ENCODE measurements at regions of chr16 and their contacts with region 1.

Region 1: GRCh38 chr16:4253394-4254150 is 11.7 kb upstream of the SRL start:
- DNase-seq: peak; percentile 94 to 100 (median 100)
- ATAC-seq: peak; percentile 97
- H3K4me3 ChIP-seq: peak overlapping the region; percentile 92
- H3K4me3 Mint-ChIP-seq: peak overlapping the region; percentile 88 to 98 (median 96)
- H3K27ac ChIP-seq: peak overlapping the region; percentile 88
- H3K27ac Mint-ChIP-seq: peak overlapping the region; percentile 88 to 98 (median 96)
- H3K4me1 ChIP-seq: peaks cover 3 to 4% of the 10 kb centered on the region in 2 donors
- H3K4me1 Mint-ChIP-seq: peaks cover 0 to 16% (median 8%) of the 10 kb centered on the region in 7 donors
- H3K27me3 ChIP-seq: no peaks in the 10 kb centered on the region
- H3K27me3 Mint-ChIP-seq: no peaks in the 10 kb centered on the region

Region 2: GRCh38 chr16:3611146-3611975 is 642.2 kb before region 1 on chr16 and contains the start of gene SLX4:
- CTCF ChIA-PET with region 1: interaction called, 3 read pairs
- POLR2A ChIA-PET with region 1: interaction called, 3 read pairs
- intact Hi-C with region 1: loop called in 1 of 2 experiments (anchors 1 kb)
- DNase-seq: peak; percentile 88 to 97 (median 95)
- ATAC-seq: peak; percentile 92
- H3K4me3 ChIP-seq: peak within 1 kb of the TSS; percentile 99
- H3K4me3 Mint-ChIP-seq: peak within 1 kb of the TSS; percentile 93 to 100 (median 99)
- H3K27ac ChIP-seq: peak within 1 kb of the TSS; percentile 90
- H3K27ac Mint-ChIP-seq: peak within 1 kb of the TSS; percentile 92 to 99 (median 98)
- H3K4me1 ChIP-seq: peaks cover 18 to 21% of the 10 kb centered on the region in 2 donors
- H3K4me1 Mint-ChIP-seq: peaks cover 37 to 70% (median 62%) of the 10 kb centered on the region in 7 donors
- H3K27me3 ChIP-seq: no peaks in the 10 kb centered on the region
- H3K27me3 Mint-ChIP-seq: no peaks in the 10 kb centered on the region
- total RNA-seq, gene SLX4: 7.1 to 12.5 (median 8.5) TPM

Region 3: DNA sequence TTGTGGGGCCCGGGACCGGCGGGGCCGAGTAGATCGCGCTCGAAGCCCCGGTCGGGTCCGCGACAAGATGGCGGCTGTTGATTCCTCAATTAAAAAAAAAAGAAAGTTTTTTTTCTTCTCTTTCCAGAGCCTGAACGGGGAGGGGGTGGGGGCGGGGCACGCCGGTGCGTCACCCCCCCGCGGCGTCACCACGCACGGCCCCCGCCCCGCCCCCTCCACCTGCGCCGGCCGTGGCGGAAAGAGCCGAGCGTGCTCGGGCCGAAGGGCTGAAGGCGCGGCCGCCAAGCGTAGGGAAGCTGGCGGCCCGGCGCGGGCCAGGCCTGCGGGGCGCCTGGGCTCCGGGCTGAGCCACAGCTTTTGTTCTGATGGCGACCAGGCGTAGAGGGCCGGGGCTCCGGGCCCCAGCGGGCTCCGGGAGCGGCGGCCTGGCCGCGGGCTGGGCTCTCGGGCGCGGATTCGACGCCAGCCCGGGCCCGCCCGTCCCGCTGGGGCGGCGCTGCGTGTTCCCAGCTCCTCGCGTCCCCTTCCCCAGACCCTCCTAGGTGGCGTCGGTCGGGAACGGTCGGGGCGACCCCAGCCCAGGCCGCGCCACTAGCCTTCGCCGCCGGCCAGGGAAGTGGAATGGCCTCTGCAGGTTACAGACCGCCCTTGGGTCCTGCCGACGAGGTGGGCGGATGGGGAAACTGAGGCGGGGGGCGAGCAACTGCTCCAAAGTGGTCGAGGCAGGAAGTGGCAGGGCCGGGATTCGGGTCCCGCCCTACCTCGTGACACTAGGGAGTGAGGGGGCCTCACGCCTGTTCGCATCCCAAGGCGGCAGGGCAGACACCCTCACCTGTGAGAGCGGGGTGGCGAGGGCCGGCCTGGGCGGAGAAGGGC is 372.7 kb before region 1 on chr16 and contains the start of gene CREBBP:
- CTCF ChIA-PET with region 1: interaction called, 3 read pairs
- POLR2A ChIA-PET with region 1: no interaction called
- intact Hi-C with region 1: loop called (anchors 2 to 5 kb)
- DNase-seq: peak; percentile 79 to 92 (median 89)
- ATAC-seq: peak; percentile 94
- H3K4me3 ChIP-seq: peak within 1 kb of the TSS; percentile 82
- H3K4me3 Mint-ChIP-seq: peak within 1 kb of the TSS; percentile 77 to 100 (median 94)
- H3K27ac ChIP-seq: peak within 1 kb of the TSS; percentile 85
- H3K27ac Mint-ChIP-seq: peak within 1 kb of the TSS; percentile 71 to 96 (median 91)
- H3K4me1 ChIP-seq: peaks cover 23 to 24% of the 10 kb centered on the region in 2 donors
- H3K4me1 Mint-ChIP-seq: peaks cover 32 to 46% (median 39%) of the 10 kb centered on the region in 7 donors
- H3K27me3 ChIP-seq: no peaks in the 10 kb centered on the region
- H3K27me3 Mint-ChIP-seq: peaks cover 0 to 8% (median 6%) of the 10 kb centered on the region in 5 donors
- total RNA-seq, gene CREBBP: 73.6 to 194 (median 137) TPM

Region 4: DNA sequence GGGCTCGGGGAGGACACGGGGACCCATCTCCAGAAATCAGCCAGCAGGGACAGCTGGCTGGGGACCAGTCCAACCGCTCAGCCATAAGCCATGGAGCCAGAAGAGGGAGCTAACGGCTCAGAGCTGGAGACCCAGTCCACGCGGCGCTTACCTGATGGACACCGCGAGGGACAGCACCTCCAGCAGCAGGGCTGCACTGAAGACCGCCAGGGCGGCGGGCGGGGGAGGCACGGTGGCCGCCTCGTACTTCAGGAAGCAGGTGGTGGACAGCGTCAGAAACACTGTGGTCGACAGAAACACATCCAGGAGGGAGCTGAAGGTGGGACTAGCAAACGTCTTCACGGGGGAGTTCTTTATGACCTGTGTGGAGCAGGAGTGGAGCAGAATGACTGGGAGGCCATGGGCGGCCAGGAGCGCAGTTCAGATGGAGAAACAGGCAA is 270.5 kb before region 1 on chr16:
- CTCF ChIA-PET with region 1: interaction called, 3 read pairs
- POLR2A ChIA-PET with region 1: interaction called, 5 read pairs
- intact Hi-C with region 1: loop called in 1 of 2 experiments (anchors 1 kb)
- DNase-seq: peak in 7 of 9 donors; percentile 23 to 48 (median 27)
- ATAC-seq: peak; percentile 82
- H3K4me3 ChIP-seq: no peak overlapping the region
- H3K4me3 Mint-ChIP-seq: peak overlapping the region in 1 of 10 donors; percentile 37
- H3K27ac ChIP-seq: no peak overlapping the region
- H3K27ac Mint-ChIP-seq: peak overlapping the region in 2 of 9 donors; percentile 20 to 36
- H3K4me1 ChIP-seq: no peaks in the 10 kb centered on the region
- H3K4me1 Mint-ChIP-seq: peaks cover 0 to 10% (median 7%) of the 10 kb centered on the region in 7 donors
- H3K27me3 ChIP-seq: no peaks in the 10 kb centered on the region
- H3K27me3 Mint-ChIP-seq: no peaks in the 10 kb centered on the region

Region 5: DNA sequence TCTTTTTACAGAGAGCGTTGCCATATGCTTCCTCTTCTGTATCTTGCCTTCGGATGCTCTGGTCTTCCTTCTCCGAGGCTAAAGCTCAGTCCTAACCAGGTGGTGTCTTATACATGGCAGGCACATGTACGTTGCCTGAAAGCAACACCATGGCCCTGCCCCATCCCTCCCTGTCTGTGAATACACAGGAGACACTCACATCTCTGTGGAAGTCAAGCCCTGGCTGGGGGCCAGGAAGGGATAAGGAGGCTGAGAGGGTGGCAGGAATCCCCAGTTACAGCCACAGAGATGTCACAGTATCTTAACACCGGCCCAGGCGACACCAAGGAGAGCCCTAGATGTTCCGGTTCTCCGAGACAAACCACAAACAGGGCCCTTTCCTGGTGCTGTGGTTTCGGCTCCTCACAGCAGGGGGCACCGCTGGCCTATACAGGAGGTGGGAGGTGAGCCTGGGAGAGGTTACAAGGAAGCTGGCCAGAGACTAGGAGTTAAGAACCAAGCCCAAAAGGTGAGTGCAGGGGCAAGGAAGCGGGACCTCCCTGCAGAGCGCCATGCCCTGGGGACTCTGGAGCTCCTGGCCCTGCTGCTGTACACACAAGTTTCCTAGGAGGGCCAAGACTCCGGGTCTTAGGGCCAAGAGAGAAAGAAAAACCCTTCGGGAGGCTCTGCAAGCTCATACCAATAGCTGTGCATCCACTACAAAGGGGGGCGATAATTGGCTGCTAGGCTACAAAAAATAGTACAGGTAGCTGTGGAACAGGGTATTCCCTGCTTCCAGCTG is 53.4 kb before region 1 on chr16:
- CTCF ChIA-PET with region 1: interaction called, 3 read pairs
- POLR2A ChIA-PET with region 1: no interaction called
- intact Hi-C with region 1: loop called in 1 of 2 experiments (anchors 1 kb)
- DNase-seq: peak in 4 of 9 donors; percentile 8 to 27 (median 21)
- ATAC-seq: peak; percentile 59
- H3K4me3 ChIP-seq: no peak overlapping the region
- H3K4me3 Mint-ChIP-seq: no peak overlapping the region
- H3K27ac ChIP-seq: no peak overlapping the region
- H3K27ac Mint-ChIP-seq: no peak overlapping the region
- H3K4me1 ChIP-seq: no peaks in the 10 kb centered on the region
- H3K4me1 Mint-ChIP-seq: peaks cover 0 to 7% (median 5%) of the 10 kb centered on the region in 7 donors
- H3K27me3 ChIP-seq: no peaks in the 10 kb centered on the region
- H3K27me3 Mint-ChIP-seq: peaks cover 0 to 25% (median 7%) of the 10 kb centered on the region in 5 donors

Region 6: DNA sequence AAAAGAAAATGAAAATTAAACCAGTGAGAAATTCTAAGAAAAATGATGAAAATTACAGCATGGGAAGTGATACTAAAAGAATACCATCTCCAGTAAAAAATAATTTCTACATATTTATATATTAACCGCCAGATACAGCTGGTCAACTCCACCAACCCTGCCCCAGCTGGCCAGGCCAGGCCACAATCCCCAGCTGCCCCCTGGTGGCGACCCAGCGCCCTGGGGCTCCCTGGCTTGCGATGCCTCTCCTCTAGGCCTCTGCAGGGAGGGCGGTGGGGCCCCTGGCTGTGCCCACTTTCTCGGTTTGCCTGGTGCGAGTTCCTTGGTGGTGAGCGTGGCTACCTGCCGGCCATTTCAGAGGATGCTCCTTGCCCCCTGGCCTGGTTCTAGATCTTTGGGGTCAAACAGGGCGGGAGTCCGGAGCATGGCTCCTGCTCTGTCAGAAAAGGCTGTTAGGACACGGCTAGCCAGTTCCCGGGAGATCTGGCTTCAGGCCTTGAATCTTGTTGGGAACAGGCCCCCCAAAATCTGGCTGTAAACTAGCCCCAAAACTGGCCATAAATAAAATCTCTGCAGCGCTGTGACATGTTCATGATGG is 76.8 kb after region 1 on chr16:
- CTCF ChIA-PET with region 1: interaction called, 3 read pairs
- POLR2A ChIA-PET with region 1: interaction called, 3 read pairs
- intact Hi-C with region 1: loop called (anchors 2 kb)
- DNase-seq: peak; percentile 39 to 82 (median 58)
- ATAC-seq: peak; percentile 80
- H3K4me3 ChIP-seq: no peak overlapping the region
- H3K4me3 Mint-ChIP-seq: no peak overlapping the region
- H3K27ac ChIP-seq: no peak overlapping the region
- H3K27ac Mint-ChIP-seq: peak overlapping the region in 1 of 9 donors; percentile 40
- H3K4me1 ChIP-seq: peaks cover 0 to 3% of the 10 kb centered on the region in 2 donors
- H3K4me1 Mint-ChIP-seq: peaks cover 0 to 4% (median 0%) of the 10 kb centered on the region in 7 donors
- H3K27me3 ChIP-seq: no peaks in the 10 kb centered on the region
- H3K27me3 Mint-ChIP-seq: peaks cover 0 to 15% (median 0%) of the 10 kb centered on the region in 5 donors

Region 7: GRCh38 chr16:4538350-4539235 is 285.0 kb after region 1 on chr16 and contains the start of gene CDIP1:
- CTCF ChIA-PET with region 1: no interaction called
- POLR2A ChIA-PET with region 1: no interaction called
- intact Hi-C with region 1: loop called in 1 of 2 experiments (anchors 1 kb)
- DNase-seq: peak; percentile 85 to 93 (median 90)
- ATAC-seq: peak; percentile 92
- H3K4me3 ChIP-seq: peak within 1 kb of the TSS; percentile 81
- H3K4me3 Mint-ChIP-seq: peak within 1 kb of the TSS; percentile 66 to 91 (median 82)
- H3K27ac ChIP-seq: peak within 1 kb of the TSS; percentile 96
- H3K27ac Mint-ChIP-seq: peak within 1 kb of the TSS; percentile 78 to 97 (median 92)
- H3K4me1 ChIP-seq: peaks cover 10 to 33% of the 10 kb centered on the region in 2 donors
- H3K4me1 Mint-ChIP-seq: peaks cover 24 to 44% (median 40%) of the 10 kb centered on the region in 7 donors
- H3K27me3 ChIP-seq: no peaks in the 10 kb centered on the region
- H3K27me3 Mint-ChIP-seq: peaks cover 0 to 9% (median 0%) of the 10 kb centered on the region in 5 donors
- total RNA-seq, gene CDIP1: 28.1 to 41.1 (median 31.0) TPM

Region 8: GRCh38 chr16:5033256-5034169 is 779.9 kb after region 1 on chr16 and contains the start of gene NAGPA:
- CTCF ChIA-PET with region 1: no interaction called
- POLR2A ChIA-PET with region 1: no interaction called
- intact Hi-C with region 1: no loop called
- DNase-seq: peak; percentile 68 to 91 (median 87)
- ATAC-seq: peak; percentile 93
- H3K4me3 ChIP-seq: peak within 1 kb of the TSS; percentile 80
- H3K4me3 Mint-ChIP-seq: peak within 1 kb of the TSS; percentile 73 to 94 (median 90)
- H3K27ac ChIP-seq: peak within 1 kb of the TSS; percentile 70
- H3K27ac Mint-ChIP-seq: peak within 1 kb of the TSS; percentile 68 to 95 (median 91)
- H3K4me1 ChIP-seq: peaks cover 17 to 18% of the 10 kb centered on the region in 2 donors
- H3K4me1 Mint-ChIP-seq: peaks cover 17 to 33% (median 23%) of the 10 kb centered on the region in 7 donors
- H3K27me3 ChIP-seq: no peaks in the 10 kb centered on the region
- H3K27me3 Mint-ChIP-seq: no peaks in the 10 kb centered on the region
- total RNA-seq, gene NAGPA: 17.8 to 39.5 (median 34.1) TPM

Measured in naive thymus-derived CD4-positive, alpha-beta T cell (primary cell).